Sciatic nerve (tissue), 2 donors: ENCODE measurements at regions of chr2 and their contacts with region 1.

Region 1: GRCh38 chr2:226478109-226478809 is 321.4 kb downstream of the IRS1 start:
- DNase-seq: peak; percentile 63
- ATAC-seq: peak; percentile 95

Region 2: DNA sequence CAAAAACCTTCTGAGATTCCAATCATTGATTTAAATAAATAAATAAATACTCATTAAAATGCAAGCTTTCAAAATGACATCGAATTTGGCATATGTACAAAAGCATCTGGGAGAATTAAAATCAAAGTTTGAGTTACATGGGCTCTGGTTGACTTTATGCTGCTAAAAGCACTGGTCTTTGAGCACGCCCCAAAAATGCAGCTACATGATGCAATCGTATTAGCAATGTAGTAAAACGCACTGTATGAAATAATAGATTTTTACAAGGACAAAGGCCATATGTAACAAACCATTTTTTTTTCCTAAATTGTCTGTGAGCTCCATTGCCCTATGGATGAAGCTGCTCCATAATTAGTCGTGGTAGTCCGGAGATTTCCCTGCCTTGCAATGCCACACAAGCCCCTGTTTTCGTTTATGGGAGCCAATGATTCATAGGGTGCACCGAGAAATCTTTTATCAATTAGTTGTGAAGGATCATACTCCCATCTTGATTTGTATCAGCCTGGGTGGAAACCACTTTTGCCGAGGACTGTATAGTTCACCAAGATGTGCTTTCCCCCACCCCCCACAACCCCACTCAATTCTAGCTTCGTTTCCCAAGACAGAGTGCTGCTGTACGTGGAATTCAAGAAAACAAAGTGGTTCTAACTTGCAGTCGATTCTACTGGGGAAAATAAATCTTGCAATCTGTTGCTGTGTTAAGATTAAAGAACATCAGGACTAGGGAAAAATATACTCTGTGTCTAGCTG is 53.0 kb after region 1 on chr2:
- intact Hi-C with region 1: loop called (anchors 2 kb)
- DNase-seq: no peak
- ATAC-seq: no peak